ENCODE measurements at regions of chr18 and their contacts with region 1.

Region 1: DNA sequence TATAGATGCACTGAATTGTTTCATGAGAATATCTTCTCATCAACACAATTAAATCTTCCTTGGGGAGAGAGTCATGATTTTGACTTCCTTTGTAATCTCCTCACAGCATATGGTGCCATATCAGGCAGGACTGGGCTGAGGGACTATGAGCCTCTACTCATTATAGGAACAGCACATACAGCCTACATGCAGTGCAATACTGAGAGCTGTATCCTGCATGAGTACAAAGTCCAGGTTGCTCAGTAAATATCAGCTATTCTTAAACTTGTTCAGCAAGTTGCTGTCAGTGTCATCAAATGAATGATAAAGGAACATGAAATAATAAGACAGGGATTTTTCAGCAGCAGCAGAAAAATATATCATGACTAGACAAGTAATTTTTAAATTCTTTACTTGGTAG is 10.8 kb downstream of the DLGAP1 start:
- DNase-seq: no peak
- ATAC-seq: no peak
- H3K4me3 ChIP-seq: no peak overlapping the region
- H3K4me3 Mint-ChIP-seq: no peak overlapping the region
- H3K27ac ChIP-seq: no peak overlapping the region
- H3K27ac Mint-ChIP-seq: no peak overlapping the region
- H3K4me1 ChIP-seq: no peaks in the 10 kb centered on the region
- H3K4me1 Mint-ChIP-seq: no peaks in the 10 kb centered on the region
- H3K27me3 ChIP-seq: no peaks in the 10 kb centered on the region
- H3K27me3 Mint-ChIP-seq: peaks cover 0 to 8% (median 0%) of the 10 kb centered on the region in 5 donors

Region 2: DNA sequence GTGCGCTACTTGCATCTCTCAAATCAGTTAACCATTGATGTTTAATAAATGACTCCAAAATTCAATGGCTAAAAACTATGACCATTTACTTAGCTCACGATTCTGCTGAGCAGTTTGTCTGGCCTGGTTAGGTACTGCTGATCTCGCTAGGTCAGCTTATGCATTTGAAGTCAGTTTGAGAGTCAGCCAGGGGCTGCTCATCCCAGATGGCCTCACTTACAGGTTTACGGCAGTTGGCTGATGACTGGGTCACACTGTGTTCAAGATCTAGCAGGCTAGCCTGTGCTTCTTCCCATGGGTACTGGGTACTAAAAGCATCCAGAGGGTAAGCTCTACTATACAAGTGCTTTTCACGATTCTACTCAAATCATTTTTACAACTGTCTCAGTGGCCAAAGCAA is 111.3 kb before region 1 on chr18:
- CTCF ChIA-PET with region 1: no interaction called
- POLR2A ChIA-PET with region 1: no interaction called
- intact Hi-C with region 1: no loop called
- DNase-seq: no peak
- ATAC-seq: no peak
- H3K4me3 ChIP-seq: no peak overlapping the region
- H3K4me3 Mint-ChIP-seq: no peak overlapping the region
- H3K27ac ChIP-seq: no peak overlapping the region
- H3K27ac Mint-ChIP-seq: no peak overlapping the region
- H3K4me1 ChIP-seq: no peaks in the 10 kb centered on the region
- H3K4me1 Mint-ChIP-seq: no peaks in the 10 kb centered on the region
- H3K27me3 ChIP-seq: no peaks in the 10 kb centered on the region
- H3K27me3 Mint-ChIP-seq: peaks cover 0 to 4% (median 0%) of the 10 kb centered on the region in 5 donors

Region 3: GRCh38 chr18:4384932-4385331 is 59.4 kb before region 1 on chr18:
- CTCF ChIA-PET with region 1: no interaction called
- POLR2A ChIA-PET with region 1: no interaction called
- intact Hi-C with region 1: loop called in 1 of 2 experiments (anchors 10 kb)
- DNase-seq: no peak
- ATAC-seq: no peak
- H3K4me3 ChIP-seq: no peak overlapping the region
- H3K4me3 Mint-ChIP-seq: no peak overlapping the region
- H3K27ac ChIP-seq: no peak overlapping the region
- H3K27ac Mint-ChIP-seq: no peak overlapping the region
- H3K4me1 ChIP-seq: no peaks in the 10 kb centered on the region
- H3K4me1 Mint-ChIP-seq: no peaks in the 10 kb centered on the region
- H3K27me3 ChIP-seq: no peaks in the 10 kb centered on the region
- H3K27me3 Mint-ChIP-seq: no peaks in the 10 kb centered on the region

Region 4: DNA sequence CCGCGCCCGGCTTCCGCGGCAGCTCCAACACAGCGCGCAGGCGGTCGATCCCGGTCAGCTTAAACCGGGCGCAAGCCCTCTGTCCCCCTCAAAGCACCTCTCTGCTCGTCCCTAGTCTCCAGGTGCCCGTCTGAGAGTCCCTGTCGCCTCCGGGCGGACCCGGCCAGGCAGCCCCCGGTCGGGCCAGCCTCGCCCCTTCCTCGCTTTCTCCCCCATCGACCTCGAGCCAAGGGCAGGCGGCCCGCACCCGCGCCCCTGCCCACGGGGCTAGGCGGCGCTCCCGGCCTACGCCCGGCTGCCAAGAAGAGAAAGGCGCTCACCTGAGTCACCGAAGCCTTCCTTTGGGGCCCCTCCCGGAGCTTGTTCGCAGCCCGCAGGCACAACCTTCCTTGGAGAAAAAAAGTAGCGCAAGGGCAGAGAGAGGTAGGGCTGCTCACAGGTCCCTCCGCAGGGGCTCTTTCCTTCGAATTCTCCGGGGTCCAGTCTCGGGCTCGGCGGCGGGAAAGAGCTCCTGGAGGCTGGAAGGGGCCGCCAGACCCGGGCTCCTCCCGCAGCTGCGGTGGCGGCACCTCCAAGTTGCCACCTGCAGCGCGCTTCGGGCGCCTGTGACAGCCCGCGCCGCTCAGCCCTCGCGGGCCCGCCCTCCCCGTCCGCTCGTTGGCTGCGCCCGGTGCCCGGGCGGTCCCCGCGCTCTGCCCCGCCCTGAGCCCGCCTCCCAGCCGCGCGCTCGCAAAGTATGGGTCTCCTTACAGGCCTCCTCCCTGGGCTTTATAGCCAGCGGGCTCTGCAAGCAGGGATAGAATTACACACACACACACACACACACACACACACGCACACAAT is 1186.0 kb after region 1 on chr18:
- CTCF ChIA-PET with region 1: no interaction called
- POLR2A ChIA-PET with region 1: no interaction called
- intact Hi-C with region 1: no loop called
- DNase-seq: peak in 7 of 9 donors; percentile 17 to 59 (median 30)
- ATAC-seq: peak; percentile 89
- H3K4me3 ChIP-seq: no peak overlapping the region
- H3K4me3 Mint-ChIP-seq: peak overlapping the region in 6 of 10 donors; percentile 65 to 93 (median 74)
- H3K27ac ChIP-seq: no peak overlapping the region
- H3K27ac Mint-ChIP-seq: no peak overlapping the region
- H3K4me1 ChIP-seq: peaks cover 0 to 5% of the 10 kb centered on the region in 2 donors
- H3K4me1 Mint-ChIP-seq: peaks cover 0 to 12% (median 7%) of the 10 kb centered on the region in 7 donors
- H3K27me3 ChIP-seq: peaks cover 0 to 3% of the 10 kb centered on the region in 2 donors
- H3K27me3 Mint-ChIP-seq: peaks cover 23 to 45% (median 36%) of the 10 kb centered on the region in 5 donors

Measured in naive thymus-derived CD4-positive, alpha-beta T cell (primary cell).